ENCODE measurements at regions of chr2 and their contacts with region 1.

Region 1: GRCh38 chr2:227033471-227034148 is 130.4 kb downstream of the COL4A4 start:
- DNase-seq: peak; percentile 6
- H3K4me3 ChIP-seq: no peak overlapping the region
- H3K27ac ChIP-seq: no peak overlapping the region
- H3K27me3 ChIP-seq: no peaks in the 10 kb centered on the region
- CTCF ChIP-seq: peak; percentile 73

Region 2: GRCh38 chr2:227022608-227023007 is 11.0 kb before region 1 on chr2:
- CTCF ChIA-PET with region 1: interaction called, 31 read pairs
- POLR2A ChIA-PET with region 1: no interaction called
- DNase-seq: no peak
- H3K4me3 ChIP-seq: no peak overlapping the region
- H3K27ac ChIP-seq: no peak overlapping the region
- H3K27me3 ChIP-seq: no peaks in the 10 kb centered on the region
- CTCF ChIP-seq: no peak

Region 3: GRCh38 chr2:227043981-227044380 is 10.4 kb after region 1 on chr2:
- CTCF ChIA-PET with region 1: interaction called, 24 read pairs
- POLR2A ChIA-PET with region 1: no interaction called
- DNase-seq: no peak
- H3K4me3 ChIP-seq: no peak overlapping the region
- H3K27ac ChIP-seq: no peak overlapping the region
- H3K27me3 ChIP-seq: peaks cover 2% of the 10 kb centered on the region
- CTCF ChIP-seq: no peak

Region 4: GRCh38 chr2:227058888-227059399 is 25.3 kb after region 1 on chr2:
- CTCF ChIA-PET with region 1: interaction called, 13 read pairs
- POLR2A ChIA-PET with region 1: no interaction called
- DNase-seq: no peak
- H3K4me3 ChIP-seq: no peak overlapping the region
- H3K27ac ChIP-seq: no peak overlapping the region
- H3K27me3 ChIP-seq: peaks cover 2% of the 10 kb centered on the region
- CTCF ChIP-seq: no peak

Region 5: GRCh38 chr2:227106845-227107759 is 73.5 kb after region 1 on chr2:
- CTCF ChIA-PET with region 1: interaction called, 11 read pairs
- POLR2A ChIA-PET with region 1: no interaction called
- DNase-seq: peak; percentile 36
- H3K4me3 ChIP-seq: no peak overlapping the region
- H3K27ac ChIP-seq: no peak overlapping the region
- H3K27me3 ChIP-seq: no peaks in the 10 kb centered on the region
- CTCF ChIP-seq: peak; percentile 90

Region 6: GRCh38 chr2:227308784-227309183 is 275.2 kb after region 1 on chr2:
- CTCF ChIA-PET with region 1: no interaction called
- POLR2A ChIA-PET with region 1: no interaction called
- DNase-seq: no peak
- H3K4me3 ChIP-seq: no peak overlapping the region
- H3K27ac ChIP-seq: no peak overlapping the region
- H3K27me3 ChIP-seq: no peaks in the 10 kb centered on the region
- CTCF ChIP-seq: no peak

Region 7: DNA sequence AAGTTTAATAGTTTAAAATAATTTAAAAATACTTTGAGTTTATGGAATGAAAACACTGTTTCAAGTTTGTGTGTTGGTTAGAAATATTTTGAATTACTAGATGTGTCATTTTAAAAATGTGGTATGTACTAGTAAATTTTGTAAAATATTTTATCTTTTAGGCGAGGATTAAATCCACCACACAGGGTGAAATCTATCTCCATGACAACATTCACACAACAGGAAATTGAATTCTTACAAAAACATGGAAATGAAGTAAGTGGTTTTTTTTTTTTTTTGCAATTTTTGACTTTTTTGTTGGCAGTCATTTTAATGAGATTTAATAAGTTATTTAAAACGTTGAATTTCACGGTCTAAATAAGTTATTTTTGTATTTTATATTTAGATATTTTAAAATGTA is 457.8 kb after region 1 on chr2:
- CTCF ChIA-PET with region 1: no interaction called
- POLR2A ChIA-PET with region 1: no interaction called
- DNase-seq: no peak
- H3K4me3 ChIP-seq: no peak overlapping the region
- H3K27ac ChIP-seq: no peak overlapping the region
- H3K27me3 ChIP-seq: no peaks in the 10 kb centered on the region
- CTCF ChIP-seq: no peak

Measured in AG04450 (cell line).